ENCODE measurements at regions of chr10 and their contacts with region 1.

Region 1: DNA sequence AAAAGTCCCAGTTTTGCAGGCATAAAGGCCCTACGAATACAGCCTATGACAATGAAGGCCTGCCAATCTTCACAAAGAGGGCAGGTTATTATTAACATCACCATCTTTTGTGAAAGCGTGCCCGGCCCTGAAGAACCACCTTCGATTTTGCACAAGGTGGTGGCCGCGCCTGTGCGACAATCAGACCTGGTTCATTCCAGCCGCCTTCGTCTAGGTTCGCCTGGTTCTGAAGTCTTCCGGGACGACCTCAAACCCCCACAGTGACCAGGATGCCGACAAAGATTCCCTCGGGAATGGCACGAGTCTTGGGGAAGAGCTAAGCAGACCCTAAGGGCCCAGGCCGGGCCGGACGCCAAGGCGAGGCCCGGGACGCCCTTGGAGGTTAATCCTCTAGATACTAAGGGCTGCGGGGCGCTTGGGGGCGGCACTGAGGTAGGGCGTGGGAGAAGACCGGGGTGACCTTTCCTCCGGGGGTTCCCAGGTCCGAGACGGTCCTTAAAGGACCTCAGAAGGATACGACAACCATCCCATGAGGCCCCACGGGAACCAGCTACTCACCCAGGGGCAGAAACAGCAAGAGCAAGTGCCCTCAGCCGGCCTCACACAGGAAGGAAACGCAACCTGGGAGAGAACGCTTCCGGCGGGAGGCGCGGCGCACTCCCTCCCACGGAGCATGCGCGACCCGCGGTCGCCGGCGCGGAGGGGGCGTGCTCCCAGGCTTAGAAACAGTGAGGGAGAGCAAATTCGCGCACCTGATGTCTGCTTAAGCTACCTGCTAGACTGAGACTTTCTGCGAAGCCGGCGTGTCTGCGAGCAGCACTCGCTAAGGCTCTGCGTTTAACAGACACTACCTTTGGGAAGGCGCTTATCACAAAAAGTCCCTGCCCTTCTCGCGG is at the start of gene ATAD1:
- DNase-seq: peak; percentile 88
- H3K4me3 Mint-ChIP-seq: peak within 1 kb of the TSS; percentile 84
- H3K27ac Mint-ChIP-seq: peak within 1 kb of the TSS; percentile 85
- H3K4me1 Mint-ChIP-seq: peaks cover 29% of the 10 kb centered on the region
- H3K27me3 Mint-ChIP-seq: peaks cover 3% of the 10 kb centered on the region
- total RNA-seq, gene ATAD1: 43.4 and 50.2 TPM in 2 replicates

Region 2: DNA sequence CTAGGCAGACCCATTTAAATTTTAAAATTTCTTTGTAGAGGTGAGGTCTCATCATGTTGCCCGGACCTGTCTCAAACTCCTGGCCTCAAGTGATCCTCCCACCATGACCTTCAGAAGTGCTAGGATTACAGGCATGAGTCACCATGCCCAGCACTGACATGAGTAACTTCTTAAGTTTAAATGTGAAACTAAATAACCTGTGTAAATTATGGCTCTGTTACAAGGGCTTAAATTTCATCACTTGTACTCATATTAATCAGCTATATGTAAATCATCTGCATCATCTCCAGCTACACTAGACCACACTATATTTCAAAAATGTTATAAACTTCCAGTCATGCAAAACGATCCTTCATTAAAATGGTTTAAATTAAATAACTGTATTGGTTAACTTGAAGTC is 56.0 kb before region 1 on chr10:
- intact Hi-C with region 1: loop called (anchors 2 kb)
- DNase-seq: peak; percentile 18
- H3K4me3 Mint-ChIP-seq: no peak overlapping the region
- H3K27ac Mint-ChIP-seq: peak overlapping the region; percentile 80
- H3K4me1 Mint-ChIP-seq: peaks cover 31% of the 10 kb centered on the region
- H3K27me3 Mint-ChIP-seq: no peaks in the 10 kb centered on the region

Region 3: DNA sequence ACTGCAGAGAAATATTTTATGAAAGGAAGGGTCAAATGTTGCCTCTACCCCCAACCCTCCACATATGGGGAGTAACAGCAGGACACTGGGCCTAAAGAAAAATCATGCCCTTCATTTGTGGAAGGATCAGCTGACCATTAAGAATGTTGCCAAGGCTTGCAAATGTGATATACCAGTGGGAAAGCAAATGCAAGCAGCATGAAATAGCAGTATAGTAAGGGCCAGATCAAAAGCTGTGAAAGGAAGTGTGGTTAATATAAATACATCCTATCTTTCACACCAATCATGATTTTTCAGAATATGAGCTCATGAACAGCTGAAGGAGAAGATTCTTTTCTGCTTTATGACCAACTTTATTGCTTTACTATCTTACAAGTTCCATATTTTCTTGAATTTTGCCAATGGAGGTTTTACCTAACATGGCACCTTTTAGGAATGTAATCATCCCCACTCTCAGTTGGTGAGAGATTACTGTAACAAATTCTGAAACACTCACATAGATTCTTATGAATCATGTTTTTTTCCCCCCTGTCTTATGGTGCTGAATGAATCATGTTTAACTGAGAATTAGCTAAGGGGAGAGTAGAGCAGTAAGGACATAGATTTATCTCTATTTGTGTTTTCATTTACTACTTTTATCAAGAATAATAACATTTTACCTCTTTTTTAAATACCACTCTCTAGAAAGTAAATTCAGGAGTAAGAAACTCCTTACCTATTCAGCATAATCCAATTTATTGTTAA is 12.3 kb after region 1 on chr10:
- intact Hi-C with region 1: loop called (anchors 1 kb)
- DNase-seq: no peak
- H3K4me3 Mint-ChIP-seq: no peak overlapping the region
- H3K27ac Mint-ChIP-seq: peak overlapping the region; percentile 17
- H3K4me1 Mint-ChIP-seq: peaks cover 39% of the 10 kb centered on the region
- H3K27me3 Mint-ChIP-seq: no peaks in the 10 kb centered on the region

Region 4: DNA sequence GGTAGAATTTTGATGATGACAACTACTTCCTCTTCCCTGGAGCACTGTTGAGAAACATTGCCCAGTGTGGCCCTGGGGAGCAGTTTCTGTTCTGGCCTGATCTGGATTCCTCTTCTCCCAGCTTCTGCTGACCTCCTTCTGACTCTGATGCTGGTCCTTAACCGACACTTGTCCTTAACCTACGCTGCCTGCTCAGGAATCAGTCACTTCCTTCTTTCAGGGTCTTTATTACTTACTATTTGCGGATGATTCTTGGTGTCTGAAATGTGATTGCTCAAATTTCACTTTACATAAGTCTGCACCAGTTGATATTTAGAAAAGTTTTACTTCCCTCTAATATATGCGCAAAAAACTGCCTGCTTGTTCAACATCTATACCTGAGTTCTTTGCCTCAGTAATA is 209.7 kb after region 1 on chr10:
- intact Hi-C with region 1: no loop called
- DNase-seq: no peak
- H3K4me3 Mint-ChIP-seq: no peak overlapping the region
- H3K27ac Mint-ChIP-seq: no peak overlapping the region
- H3K4me1 Mint-ChIP-seq: peaks cover 10% of the 10 kb centered on the region
- H3K27me3 Mint-ChIP-seq: peaks cover 7% of the 10 kb centered on the region

Region 5: DNA sequence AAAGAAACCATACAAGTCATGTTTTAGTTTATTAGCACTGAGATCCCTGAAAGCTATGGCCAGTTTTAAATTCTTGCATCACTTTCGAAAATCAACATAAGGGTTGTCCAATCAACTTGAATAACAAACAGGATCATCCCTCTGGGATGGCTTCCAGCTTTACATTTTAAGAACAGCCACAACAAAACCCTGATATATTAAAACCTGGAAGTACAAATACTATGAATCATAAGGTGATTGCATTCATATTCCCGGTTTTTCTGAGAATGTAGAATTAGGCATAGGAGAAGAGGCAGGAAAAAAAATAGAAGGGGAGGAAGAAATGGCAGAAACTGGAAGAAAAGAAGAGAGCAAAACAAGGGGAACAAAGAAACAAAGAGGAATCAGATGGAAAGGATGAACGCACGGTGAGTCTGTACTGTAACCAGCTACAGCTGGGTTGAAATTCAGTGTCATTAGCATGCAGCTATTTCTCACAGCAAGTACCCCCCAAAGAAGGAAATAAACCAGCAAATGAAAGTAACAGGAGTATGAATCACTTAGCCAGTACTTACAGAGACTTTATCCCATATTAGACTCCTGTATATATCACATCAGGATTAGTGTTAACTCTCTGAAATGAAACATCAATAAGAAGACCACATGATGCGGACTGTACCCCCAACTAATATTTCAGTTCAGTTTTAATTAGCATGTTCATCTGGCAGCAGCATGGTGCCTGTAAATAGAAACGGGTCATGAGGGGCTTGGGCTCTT is 463.9 kb after region 1 on chr10:
- intact Hi-C with region 1: no loop called
- DNase-seq: no peak
- H3K4me3 Mint-ChIP-seq: no peak overlapping the region
- H3K27ac Mint-ChIP-seq: no peak overlapping the region
- H3K4me1 Mint-ChIP-seq: peaks cover 35% of the 10 kb centered on the region
- H3K27me3 Mint-ChIP-seq: peaks cover 3% of the 10 kb centered on the region